CD8-positive, alpha-beta T cell (primary cell): ENCODE measurements at regions of chr6 and their contacts with region 1.

Region 1: DNA sequence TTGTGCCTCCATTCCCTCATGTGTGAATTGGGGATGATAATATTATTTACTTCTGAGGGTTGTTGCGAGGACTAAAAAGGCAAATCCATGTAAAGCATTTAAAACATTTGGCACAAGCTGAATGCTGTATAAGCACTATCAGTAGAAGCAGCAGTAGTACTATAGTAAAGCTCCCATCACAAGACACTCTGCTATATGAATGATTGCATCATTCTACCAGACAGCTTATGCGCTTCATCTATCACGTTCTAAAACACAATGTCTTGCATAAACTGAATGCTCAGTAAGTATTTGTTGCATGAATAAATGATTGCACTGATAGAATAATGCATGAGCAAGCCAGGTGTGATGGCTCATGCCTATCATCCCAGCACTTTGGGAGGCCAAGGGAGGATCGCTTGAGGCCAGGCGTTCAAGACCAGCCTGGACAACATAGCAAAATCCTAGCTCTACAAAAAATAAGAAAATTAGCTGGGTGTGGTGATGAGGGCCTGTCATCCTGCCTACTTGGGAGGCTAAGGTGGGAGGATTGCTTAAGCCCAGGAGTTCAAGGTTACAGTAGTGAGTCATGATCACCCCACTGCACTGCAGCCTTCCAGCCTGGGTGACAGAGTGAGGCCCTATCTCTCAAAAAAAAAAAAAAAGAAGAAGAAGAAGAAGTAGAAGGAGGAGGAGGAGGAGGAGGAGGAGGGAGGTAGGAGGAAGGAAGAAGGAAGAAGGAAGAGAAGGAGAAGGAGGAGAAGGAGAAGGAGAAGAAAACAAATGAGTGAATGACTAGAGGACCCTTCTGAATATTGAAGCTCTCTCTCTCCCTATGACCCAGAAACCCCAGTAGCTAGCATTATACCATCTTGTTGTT is 50.0 kb upstream of the FOXO3 start:
- DNase-seq: no peak
- ATAC-seq: no peak
- H3K4me3 ChIP-seq: no peak overlapping the region
- H3K4me3 Mint-ChIP-seq: no peak overlapping the region
- H3K27ac ChIP-seq: no peak overlapping the region
- H3K27ac Mint-ChIP-seq: no peak overlapping the region
- H3K4me1 ChIP-seq: no peaks in the 10 kb centered on the region
- H3K4me1 Mint-ChIP-seq: no peaks in the 10 kb centered on the region
- H3K27me3 ChIP-seq: no peaks in the 10 kb centered on the region
- H3K27me3 Mint-ChIP-seq: no peaks in the 10 kb centered on the region
- CTCF ChIP-seq: no peak

Region 2: DNA sequence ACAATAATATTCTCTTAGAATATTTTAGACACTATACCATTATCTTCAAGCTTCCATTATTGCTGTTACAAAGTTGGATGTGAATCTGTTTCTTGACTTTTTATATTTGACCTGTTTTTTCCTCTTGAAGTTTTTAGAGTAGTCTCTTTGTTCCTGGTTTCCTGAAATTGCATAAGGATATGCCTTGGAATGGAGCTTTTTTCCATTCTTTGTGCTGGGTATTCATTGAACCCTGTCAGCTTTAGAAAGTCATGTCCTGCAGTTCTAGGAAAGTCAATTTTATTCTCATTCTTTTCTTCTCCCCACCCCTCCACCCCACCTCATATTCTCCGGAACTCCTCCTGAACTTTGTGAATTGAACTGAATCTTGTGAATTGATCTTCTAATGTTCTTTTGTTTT is 42.3 kb before region 1 on chr6:
- CTCF ChIA-PET with region 1: no interaction called
- POLR2A ChIA-PET with region 1: no interaction called
- intact Hi-C with region 1: loop called in 1 of 2 experiments (anchors 1 kb)
- DNase-seq: no peak
- ATAC-seq: no peak
- H3K4me3 ChIP-seq: no peak overlapping the region
- H3K4me3 Mint-ChIP-seq: no peak overlapping the region
- H3K27ac ChIP-seq: no peak overlapping the region
- H3K27ac Mint-ChIP-seq: no peak overlapping the region
- H3K4me1 ChIP-seq: no peaks in the 10 kb centered on the region
- H3K4me1 Mint-ChIP-seq: no peaks in the 10 kb centered on the region
- H3K27me3 ChIP-seq: no peaks in the 10 kb centered on the region
- H3K27me3 Mint-ChIP-seq: peaks cover 3% of the 10 kb centered on the region
- CTCF ChIP-seq: no peak